ENCODE measurements at regions of chr10 and their contacts with region 1.

Region 1: DNA sequence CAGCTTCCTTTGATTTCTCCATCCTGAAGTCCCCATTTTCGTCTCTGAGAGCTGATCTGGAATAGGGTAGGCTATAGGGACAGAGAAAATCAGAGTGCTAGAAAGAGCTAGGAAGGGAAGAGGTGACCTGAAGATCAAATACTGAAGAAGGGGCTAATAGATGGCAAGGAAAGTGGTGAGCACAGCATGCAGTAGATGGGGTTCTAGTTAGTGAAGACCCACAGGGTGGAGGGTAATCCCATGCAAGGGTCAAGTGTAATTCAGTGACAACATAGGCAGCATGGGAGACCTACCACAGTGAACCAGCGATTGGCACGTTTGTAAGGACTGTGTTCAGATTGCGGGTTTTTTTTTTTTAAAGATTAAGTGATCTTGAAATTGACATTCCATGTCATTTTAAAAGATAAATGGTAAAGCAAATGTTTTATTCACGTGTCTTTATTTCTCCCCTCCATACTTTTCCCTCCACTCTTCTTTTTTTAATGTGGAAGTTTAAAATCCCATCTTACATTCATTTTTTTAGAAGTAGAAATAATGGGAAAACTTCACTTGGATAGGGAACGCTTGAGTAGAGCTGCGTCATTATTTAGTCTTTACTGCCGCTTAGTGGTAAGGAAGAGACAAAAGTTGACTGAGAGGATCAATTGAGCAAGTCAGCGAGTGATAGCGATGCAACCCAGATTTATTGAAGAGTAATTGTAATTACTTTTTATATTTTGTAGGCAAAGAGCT is 21.0 kb upstream of the ABI1 start:
- DNase-seq: no peak
- ATAC-seq: peak; percentile 86
- H3K4me3 ChIP-seq: no peak overlapping the region
- H3K27ac ChIP-seq: no peak overlapping the region
- H3K4me1 ChIP-seq: no peaks in the 10 kb centered on the region
- H3K27me3 ChIP-seq: no peaks in the 10 kb centered on the region
- CTCF ChIP-seq: peak; percentile 68

Region 2: DNA sequence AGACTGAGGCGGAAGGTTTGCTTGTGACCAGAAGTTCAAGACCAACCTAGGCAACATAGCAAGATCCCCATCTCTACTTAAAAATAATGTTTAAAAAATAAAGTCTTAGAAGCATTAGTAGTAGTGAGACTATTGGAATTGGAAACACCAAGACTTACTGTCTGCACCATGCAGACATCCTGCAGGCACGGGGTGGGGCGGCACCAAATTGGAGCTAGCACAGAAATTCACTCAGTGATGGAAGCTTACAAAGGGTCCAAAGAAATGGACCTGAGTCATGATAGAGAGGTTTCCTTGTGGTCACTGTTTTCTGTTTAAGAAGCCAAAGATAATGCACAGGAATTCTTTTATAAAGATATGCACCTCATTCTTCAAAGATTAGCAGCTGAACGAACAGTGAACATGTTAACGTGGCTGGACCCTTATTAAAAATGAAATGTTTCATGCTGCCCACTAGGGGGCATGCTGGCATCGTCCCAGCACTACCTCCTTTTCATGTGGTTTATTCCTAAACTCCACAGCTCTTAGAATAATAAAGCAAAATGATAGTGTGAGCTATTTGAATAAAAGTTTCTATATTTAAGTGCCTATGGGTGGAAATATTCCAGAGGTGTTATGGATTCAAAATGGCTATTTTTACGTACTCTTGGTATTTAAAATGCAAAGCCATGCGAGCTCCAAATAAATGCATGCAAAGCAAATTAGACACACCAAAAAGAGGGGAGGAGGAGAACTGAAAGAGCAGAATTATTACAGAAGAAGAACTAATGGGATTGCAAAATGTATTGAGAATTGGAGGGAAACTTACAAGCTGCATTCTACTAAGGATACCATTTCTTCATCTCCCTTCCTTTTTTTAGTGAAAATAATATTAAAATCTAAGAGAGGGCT is 155.7 kb before region 1 on chr10:
- intact Hi-C with region 1: loop called (anchors 10 kb)
- DNase-seq: peak; percentile 76
- ATAC-seq: peak; percentile 87
- H3K4me3 ChIP-seq: no peak overlapping the region
- H3K27ac ChIP-seq: no peak overlapping the region
- H3K4me1 ChIP-seq: no peaks in the 10 kb centered on the region
- H3K27me3 ChIP-seq: no peaks in the 10 kb centered on the region
- CTCF ChIP-seq: peak; percentile 89